Activated CD4-positive, alpha-beta memory T cell treated with anti-CD3 and anti-CD28 coated beads for 36 hours (primary cell): ENCODE measurements at regions of chrX and their contacts with region 1.

Region 1: DNA sequence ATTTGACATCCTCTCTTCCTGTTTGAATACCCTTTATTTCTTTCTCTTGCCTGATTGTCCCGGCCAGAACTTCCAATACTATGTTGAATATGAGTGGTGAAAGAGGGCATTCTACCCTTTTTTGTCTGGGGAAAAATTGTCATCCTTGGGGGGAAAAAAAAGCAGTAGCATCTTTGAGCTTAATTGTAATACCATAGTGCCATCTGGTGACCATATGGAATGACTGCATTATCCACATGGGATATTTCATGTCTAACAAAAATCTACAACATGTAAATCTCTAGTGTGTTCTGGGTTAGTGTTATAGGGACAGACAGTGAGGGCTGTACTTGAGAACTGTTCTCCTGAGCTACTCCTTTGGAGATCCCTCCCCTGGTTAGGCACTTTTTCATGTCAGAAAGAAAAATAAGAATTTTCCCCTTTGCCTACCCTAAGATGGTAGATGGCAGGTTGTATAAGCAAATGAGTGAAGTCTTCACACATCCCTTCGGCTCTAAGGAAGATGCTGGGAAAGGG is 26.0 kb downstream of the CAPN6 start:
- DNase-seq: no peak
- H3K4me3 Mint-ChIP-seq: no peak overlapping the region
- H3K27ac Mint-ChIP-seq: no peak overlapping the region
- H3K4me1 Mint-ChIP-seq: no peaks in the 10 kb centered on the region
- H3K27me3 Mint-ChIP-seq: no peaks in the 10 kb centered on the region

Region 2: DNA sequence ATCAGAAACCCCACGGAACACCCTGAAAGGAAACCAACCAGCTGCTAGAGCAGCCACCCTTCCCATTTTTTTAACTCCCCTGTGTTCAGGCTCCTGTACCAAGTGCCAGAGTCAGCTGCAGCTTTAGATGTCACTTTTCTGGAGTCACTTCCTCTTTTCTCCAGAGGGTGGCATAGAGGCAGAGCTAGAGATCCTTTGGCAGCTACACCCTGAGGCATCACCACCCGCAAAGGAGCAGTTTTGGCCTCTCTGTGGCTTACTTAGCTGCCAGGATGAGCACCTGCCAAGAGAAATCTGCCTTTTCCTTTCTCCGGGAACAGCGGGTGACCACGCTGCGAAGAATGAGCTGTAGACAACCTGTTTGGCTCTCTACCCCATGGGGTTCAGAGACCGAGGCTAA is 390.7 kb before region 1 on chrX:
- CTCF ChIA-PET with region 1: interaction called, 11 read pairs
- POLR2A ChIA-PET with region 1: no interaction called
- intact Hi-C with region 1: no loop called
- DNase-seq: no peak
- H3K4me3 Mint-ChIP-seq: no peak overlapping the region
- H3K27ac Mint-ChIP-seq: no peak overlapping the region
- H3K4me1 Mint-ChIP-seq: no peaks in the 10 kb centered on the region
- H3K27me3 Mint-ChIP-seq: peaks cover 2% of the 10 kb centered on the region

Region 3: GRCh38 chrX:110992611-110993010 is 251.7 kb before region 1 on chrX:
- CTCF ChIA-PET with region 1: interaction called, 10 read pairs
- POLR2A ChIA-PET with region 1: no interaction called
- intact Hi-C with region 1: loop called (anchors 1 kb)
- DNase-seq: peak; percentile 22
- H3K4me3 Mint-ChIP-seq: no peak overlapping the region
- H3K27ac Mint-ChIP-seq: no peak overlapping the region
- H3K4me1 Mint-ChIP-seq: no peaks in the 10 kb centered on the region
- H3K27me3 Mint-ChIP-seq: peaks cover 2% of the 10 kb centered on the region

Region 4: GRCh38 chrX:111168314-111168713 is 76.0 kb before region 1 on chrX:
- CTCF ChIA-PET with region 1: interaction called, 3 read pairs
- POLR2A ChIA-PET with region 1: no interaction called
- intact Hi-C with region 1: loop called (anchors 5 kb)
- DNase-seq: no peak
- H3K4me3 Mint-ChIP-seq: no peak overlapping the region
- H3K27ac Mint-ChIP-seq: no peak overlapping the region
- H3K4me1 Mint-ChIP-seq: peaks cover 4% of the 10 kb centered on the region
- H3K27me3 Mint-ChIP-seq: no peaks in the 10 kb centered on the region

Region 5: GRCh38 chrX:111811831-111812230 is 567.5 kb after region 1 on chrX:
- CTCF ChIA-PET with region 1: no interaction called
- POLR2A ChIA-PET with region 1: no interaction called
- intact Hi-C with region 1: no loop called
- DNase-seq: no peak
- H3K4me3 Mint-ChIP-seq: no peak overlapping the region
- H3K27ac Mint-ChIP-seq: no peak overlapping the region
- H3K4me1 Mint-ChIP-seq: no peaks in the 10 kb centered on the region
- H3K27me3 Mint-ChIP-seq: no peaks in the 10 kb centered on the region